PC-3 (cell line): ENCODE measurements at regions of chr5 and their contacts with region 1.

Region 1: GRCh38 chr5:94153736-94154450 is 412.5 kb upstream of the POU5F2 start:
- DNase-seq: no peak
- ATAC-seq: no peak
- H3K4me3 ChIP-seq: no peak overlapping the region
- H3K27ac ChIP-seq: no peak overlapping the region
- H3K4me1 ChIP-seq: no peaks in the 10 kb centered on the region
- H3K27me3 ChIP-seq: no peaks in the 10 kb centered on the region
- CTCF ChIP-seq: no peak

Region 2: GRCh38 chr5:94045839-94046782 is 107.8 kb before region 1 on chr5:
- CTCF ChIA-PET with region 1: no interaction called
- POLR2A ChIA-PET with region 1: no interaction called
- intact Hi-C with region 1: no loop called
- DNase-seq: no peak
- ATAC-seq: no peak
- H3K4me3 ChIP-seq: no peak overlapping the region
- H3K27ac ChIP-seq: no peak overlapping the region
- H3K4me1 ChIP-seq: no peaks in the 10 kb centered on the region
- H3K27me3 ChIP-seq: no peaks in the 10 kb centered on the region
- CTCF ChIP-seq: no peak

Region 3: GRCh38 chr5:94240993-94241651 is 87.2 kb after region 1 on chr5:
- CTCF ChIA-PET with region 1: no interaction called
- POLR2A ChIA-PET with region 1: interaction called, 4 read pairs
- intact Hi-C with region 1: loop called (anchors 10 kb)
- DNase-seq: peak; percentile 77
- ATAC-seq: peak; percentile 88
- H3K4me3 ChIP-seq: peak overlapping the region; percentile 13; the same call in 1 of the 2 replicates
- H3K27ac ChIP-seq: peak overlapping the region; percentile 82
- H3K4me1 ChIP-seq: peaks cover 19% of the 10 kb centered on the region
- H3K27me3 ChIP-seq: no peaks in the 10 kb centered on the region
- CTCF ChIP-seq: no peak